Dorsolateral prefrontal cortex (tissue), 120 donors: ENCODE measurements at regions of chr12 and their contacts with region 1.

Region 1: GRCh38 chr12:57069523-57069922 is 9.1 kb downstream of the NEMP1 start:
- DNase-seq: peak in 4 of 10 donors; percentile 47 to 78 (median 50)
- H3K4me3 ChIP-seq: no peak overlapping the region
- H3K27ac ChIP-seq: peak overlapping the region in 50 of 59 donors; percentile 2 to 81 (median 62)
- H3K27me3 ChIP-seq: no peaks in the 10 kb centered on the region
- CTCF ChIP-seq: peak; percentile 54 to 98 (median 93)

Region 2: GRCh38 chr12:56922031-56922430 is 147.5 kb before region 1 on chr12:
- intact Hi-C with region 1: no loop called
- DNase-seq: no peak
- H3K4me3 ChIP-seq: no peak overlapping the region
- H3K27ac ChIP-seq: no peak overlapping the region
- H3K27me3 ChIP-seq: no peaks in the 10 kb centered on the region
- CTCF ChIP-seq: no peak

Region 3: GRCh38 chr12:57012600-57013465 is 56.7 kb before region 1 on chr12:
- intact Hi-C with region 1: loop called (anchors 5 kb)
- DNase-seq: no peak
- H3K4me3 ChIP-seq: no peak overlapping the region
- H3K27ac ChIP-seq: no peak overlapping the region
- H3K27me3 ChIP-seq: peaks cover 0 to 22% (median 0%) of the 10 kb centered on the region in 45 donors
- CTCF ChIP-seq: no peak

Region 4: GRCh38 chr12:57112492-57113294 is 43.2 kb after region 1 on chr12:
- intact Hi-C with region 1: loop called (anchors 1 to 2 kb)
- DNase-seq: peak in 7 of 10 donors; percentile 68 to 85 (median 77)
- H3K4me3 ChIP-seq: peak overlapping the region in 52 of 59 donors; percentile 2 to 76 (median 60)
- H3K27ac ChIP-seq: peak overlapping the region in 53 of 59 donors; percentile 29 to 99 (median 93)
- H3K27me3 ChIP-seq: no peaks in the 10 kb centered on the region
- CTCF ChIP-seq: peak in 55 of 56 donors; percentile 39 to 97 (median 90)

Region 5: GRCh38 chr12:57182921-57183790 is 113.6 kb after region 1 on chr12:
- intact Hi-C with region 1: loop called in 1 of 2 experiments (anchors 5 kb)
- DNase-seq: peak in 8 of 10 donors; percentile 56 to 83 (median 64)
- H3K4me3 ChIP-seq: no peak overlapping the region
- H3K27ac ChIP-seq: no peak overlapping the region
- H3K27me3 ChIP-seq: no peaks in the 10 kb centered on the region
- CTCF ChIP-seq: peak; percentile 46 to 93 (median 86)